GM10248 (cell line): ENCODE measurements at regions of chr6 and their contacts with region 1.

Region 1: DNA sequence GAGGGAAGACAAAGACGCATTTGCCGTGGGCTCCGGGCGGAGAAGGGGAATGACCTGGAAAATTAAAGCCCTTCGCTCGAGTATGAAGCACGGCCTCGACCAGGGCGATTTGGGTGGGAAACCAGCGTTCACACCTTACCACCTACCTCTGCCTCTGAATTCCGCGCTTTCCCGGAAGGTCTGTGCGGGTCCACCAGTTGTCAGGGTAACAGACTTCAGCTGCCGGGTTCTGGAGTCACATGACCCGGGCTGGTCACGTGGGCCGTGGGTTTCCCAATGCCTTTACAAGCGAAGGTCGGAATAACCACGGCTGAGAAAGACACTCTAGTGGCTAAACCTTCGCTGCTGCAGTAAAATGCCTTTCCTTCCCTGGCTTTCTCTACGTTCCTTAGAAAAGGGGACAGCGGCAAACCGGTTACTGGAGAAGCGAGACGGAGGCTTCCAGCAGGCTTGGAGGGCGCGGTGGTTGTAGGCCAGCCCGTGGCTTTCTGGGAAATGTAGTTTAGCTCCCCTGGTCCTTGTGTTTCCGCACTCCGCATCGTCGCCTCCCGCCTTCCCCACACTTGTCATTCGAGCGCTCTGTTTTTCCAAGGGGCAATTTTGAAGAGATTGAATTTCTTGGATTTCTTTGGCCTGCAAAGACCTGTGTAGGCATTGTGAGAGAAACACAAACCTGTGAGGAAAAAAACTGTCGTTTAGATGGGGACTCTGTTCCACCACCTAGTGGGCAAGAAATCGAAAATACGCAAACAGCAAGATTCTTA is at the start of gene CEP162:
- DNase-seq: peak; percentile 84
- CTCF ChIP-seq: peak; percentile 40

Region 2: DNA sequence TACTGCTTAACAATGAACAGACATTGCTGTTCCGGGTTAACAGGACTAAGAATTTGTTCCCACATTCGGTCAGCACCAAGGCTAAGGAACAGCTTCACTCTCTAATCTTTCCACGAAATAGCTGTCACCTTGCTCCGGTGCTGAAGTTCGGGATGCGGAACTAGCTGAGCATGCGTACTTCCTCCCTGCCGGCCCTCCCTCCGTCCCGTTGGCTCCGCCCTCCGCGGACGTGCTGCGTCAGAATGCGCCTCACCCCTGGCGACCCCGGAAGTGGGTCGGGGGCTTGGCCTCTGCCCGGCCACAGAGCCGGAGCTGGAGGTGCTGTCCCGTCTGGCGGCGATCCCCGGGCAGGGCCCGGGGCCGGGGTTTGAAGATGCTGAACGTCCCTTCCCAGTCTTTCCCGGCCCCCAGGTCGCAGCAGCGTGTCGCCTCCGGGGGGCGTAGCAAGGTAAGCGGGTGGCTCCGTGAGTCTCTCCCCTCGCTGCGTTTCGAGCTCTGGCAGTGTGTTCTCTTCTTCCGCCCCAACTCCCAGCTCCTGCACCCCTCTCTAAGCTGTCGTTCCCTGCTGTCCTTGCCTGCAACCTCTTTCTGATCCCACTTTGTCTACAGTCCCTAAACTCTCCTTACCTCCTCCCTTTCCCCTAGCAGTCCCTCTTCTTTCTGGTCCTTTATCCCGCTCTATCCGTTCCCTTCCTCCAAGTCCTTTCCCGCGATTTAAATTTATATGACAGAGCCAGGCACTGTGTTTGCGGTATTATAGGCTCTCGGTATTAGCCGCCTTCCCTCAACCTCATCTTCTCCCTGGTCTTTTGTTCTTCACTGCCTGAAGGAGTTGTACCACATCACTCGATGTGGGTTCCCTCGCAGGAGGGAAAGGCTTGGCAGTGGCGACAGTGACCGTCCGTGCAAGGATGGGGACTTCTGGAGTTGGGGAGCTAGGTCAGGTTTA is 367.9 kb before region 1 on chr6 and contains the start of gene CYB5R4:
- CTCF ChIA-PET with region 1: interaction called, 11 read pairs
- POLR2A ChIA-PET with region 1: interaction called, 3 read pairs
- DNase-seq: peak; percentile 96
- CTCF ChIP-seq: no peak

Region 3: GRCh38 chr6:83884523-83884922 is 343.1 kb before region 1 on chr6:
- CTCF ChIA-PET with region 1: interaction called, 13 read pairs
- POLR2A ChIA-PET with region 1: no interaction called
- DNase-seq: peak; percentile 35
- CTCF ChIP-seq: peak; percentile 67

Region 4: DNA sequence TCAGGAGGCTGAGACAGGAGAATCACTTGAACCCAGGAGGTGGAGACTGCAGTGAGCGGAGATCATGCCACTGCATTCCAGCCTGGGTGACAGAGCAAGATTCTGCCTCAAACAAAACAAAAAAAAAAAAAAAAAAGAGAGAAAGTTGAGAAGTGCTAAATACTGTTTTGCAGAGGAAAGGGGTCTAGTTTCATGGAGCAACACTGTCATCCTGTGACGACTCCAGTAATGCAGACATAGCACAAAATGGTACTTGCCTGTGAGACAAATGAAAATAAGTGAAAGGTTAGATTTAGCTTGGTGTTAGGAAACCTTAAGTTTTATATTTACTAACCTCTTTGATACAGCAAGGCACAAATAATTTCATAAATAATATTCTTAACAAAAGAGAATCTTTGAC is 29.9 kb before region 1 on chr6:
- CTCF ChIA-PET with region 1: interaction called, 10 read pairs
- POLR2A ChIA-PET with region 1: no interaction called
- DNase-seq: no peak
- CTCF ChIP-seq: no peak

Region 5: GRCh38 chr6:84242265-84242664 is 14.6 kb after region 1 on chr6:
- CTCF ChIA-PET with region 1: interaction called, 16 read pairs
- POLR2A ChIA-PET with region 1: no interaction called
- DNase-seq: no peak
- CTCF ChIP-seq: no peak